ENCODE measurements at regions of chr16 and their contacts with region 1.

Region 1: GRCh38 chr16:28950648-28951409 is at the start of gene NFATC2IP:
- DNase-seq: peak; percentile 99
- H3K4me3 Mint-ChIP-seq: peak within 1 kb of the TSS; percentile 99
- H3K27ac Mint-ChIP-seq: peak within 1 kb of the TSS; percentile 92
- H3K4me1 Mint-ChIP-seq: peaks cover 19% of the 10 kb centered on the region
- H3K27me3 Mint-ChIP-seq: no peaks in the 10 kb centered on the region
- CTCF ChIP-seq: no peak
- total RNA-seq, gene NFATC2IP: 39.5 and 41.3 TPM in 2 replicates

Region 2: GRCh38 chr16:28823872-28824716 is 126.7 kb before region 1 on chr16:
- CTCF ChIA-PET with region 1: interaction called, 8 read pairs
- POLR2A ChIA-PET with region 1: interaction called, 10 read pairs
- intact Hi-C with region 1: no loop called
- DNase-seq: peak; percentile 96
- H3K4me3 Mint-ChIP-seq: peak overlapping the region; percentile 91
- H3K27ac Mint-ChIP-seq: peak overlapping the region; percentile 96
- H3K4me1 Mint-ChIP-seq: peaks cover 28% of the 10 kb centered on the region
- H3K27me3 Mint-ChIP-seq: no peaks in the 10 kb centered on the region
- CTCF ChIP-seq: peak; percentile 18

Region 3: GRCh38 chr16:28846080-28846932 is 104.5 kb before region 1 on chr16 and contains the start of gene TUFM:
- CTCF ChIA-PET with region 1: interaction called, 28 read pairs
- POLR2A ChIA-PET with region 1: interaction called, 14 read pairs
- intact Hi-C with region 1: no loop called
- DNase-seq: peak; percentile 97
- H3K4me3 Mint-ChIP-seq: peak within 1 kb of the TSS; percentile 99
- H3K27ac Mint-ChIP-seq: peak within 1 kb of the TSS; percentile 99
- H3K4me1 Mint-ChIP-seq: peaks cover 7% of the 10 kb centered on the region
- H3K27me3 Mint-ChIP-seq: no peaks in the 10 kb centered on the region
- CTCF ChIP-seq: peak; percentile 39
- total RNA-seq, gene TUFM: 184 and 198 TPM in 2 replicates

Region 4: DNA sequence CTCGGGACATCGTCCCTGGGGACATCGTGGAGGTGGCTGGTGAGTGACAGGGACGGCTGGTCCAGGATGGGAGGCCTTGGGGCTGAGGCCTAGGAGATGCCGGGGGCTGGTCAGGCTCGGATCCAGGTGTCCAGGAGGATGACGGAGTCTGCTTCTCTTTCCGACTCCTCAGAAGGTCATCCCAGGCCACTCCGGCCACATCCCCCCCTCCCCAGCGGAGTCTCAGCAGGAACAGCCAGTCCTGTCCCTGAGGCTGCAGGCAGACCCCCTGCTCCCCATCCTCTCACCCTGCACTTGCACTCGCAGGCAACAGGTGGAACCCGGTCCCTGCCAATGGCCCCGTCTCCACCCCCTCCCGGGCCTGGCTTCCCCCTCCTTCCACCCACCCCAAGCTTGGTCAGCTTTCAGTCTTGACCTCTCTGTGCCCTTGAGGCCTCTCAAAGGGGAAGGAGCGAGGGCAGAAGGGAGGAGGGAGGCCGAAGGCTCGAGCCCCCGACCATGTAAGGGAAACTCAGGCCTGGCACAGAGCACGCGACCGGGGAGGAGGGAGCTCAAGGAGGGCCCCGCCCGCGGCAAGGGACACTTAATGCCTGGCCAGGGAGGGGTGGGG is 68.2 kb before region 1 on chr16:
- CTCF ChIA-PET with region 1: no interaction called
- POLR2A ChIA-PET with region 1: no interaction called
- intact Hi-C with region 1: no loop called
- DNase-seq: no peak
- H3K4me3 Mint-ChIP-seq: no peak overlapping the region
- H3K27ac Mint-ChIP-seq: no peak overlapping the region
- H3K4me1 Mint-ChIP-seq: no peaks in the 10 kb centered on the region
- H3K27me3 Mint-ChIP-seq: peaks cover 12% of the 10 kb centered on the region
- CTCF ChIP-seq: no peak

Region 5: DNA sequence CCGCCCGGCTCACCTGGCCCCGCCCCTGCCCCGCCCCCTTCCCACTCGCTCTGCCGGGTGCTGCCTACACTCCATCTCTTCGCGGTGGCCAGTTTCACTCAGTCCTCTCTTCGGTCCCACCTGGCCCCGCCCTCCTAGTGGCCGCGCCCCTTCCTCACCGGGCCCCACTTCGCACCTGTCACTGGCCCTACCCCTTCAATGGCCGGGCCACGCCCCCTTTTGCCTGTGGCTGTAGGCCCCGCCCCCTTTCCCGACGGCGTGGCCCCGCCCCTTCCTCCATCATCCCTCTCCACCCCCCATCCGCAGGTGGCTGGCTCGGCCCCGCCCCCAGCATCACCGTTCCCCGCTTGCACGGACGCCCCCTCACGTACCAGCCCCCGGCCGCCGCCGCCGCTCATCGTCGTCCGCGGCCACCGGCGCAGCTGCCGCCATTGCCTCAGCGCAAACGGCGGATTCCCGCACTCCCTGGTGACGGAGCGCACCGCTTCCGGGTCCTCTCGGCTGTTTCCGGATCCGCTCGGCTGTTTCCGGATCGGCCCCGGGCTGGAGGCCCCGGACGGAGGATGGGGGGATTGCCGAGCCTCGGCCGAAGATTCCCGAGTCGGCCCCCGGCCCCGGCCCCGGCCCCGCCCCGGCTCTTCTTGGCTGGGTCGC is 26.0 kb before region 1 on chr16 and contains the start of gene RABEP2:
- CTCF ChIA-PET with region 1: interaction called, 8 read pairs
- POLR2A ChIA-PET with region 1: interaction called, 19 read pairs
- intact Hi-C with region 1: no loop called
- DNase-seq: peak; percentile 95
- H3K4me3 Mint-ChIP-seq: peak within 1 kb of the TSS; percentile 85
- H3K27ac Mint-ChIP-seq: peak within 1 kb of the TSS; percentile 76
- H3K4me1 Mint-ChIP-seq: peaks cover 15% of the 10 kb centered on the region
- H3K27me3 Mint-ChIP-seq: no peaks in the 10 kb centered on the region
- CTCF ChIP-seq: no peak
- total RNA-seq, gene RABEP2: 10.7 and 17.8 TPM in 2 replicates

Region 6: GRCh38 chr16:28974437-28975157 is 23.8 kb after region 1 on chr16 and contains the start of gene SPNS1:
- CTCF ChIA-PET with region 1: interaction called, 7 read pairs
- POLR2A ChIA-PET with region 1: interaction called, 30 read pairs
- intact Hi-C with region 1: loop called (anchors 2 kb)
- DNase-seq: peak; percentile 94
- H3K4me3 Mint-ChIP-seq: peak within 1 kb of the TSS; percentile 95
- H3K27ac Mint-ChIP-seq: peak within 1 kb of the TSS; percentile 96
- H3K4me1 Mint-ChIP-seq: peaks cover 12% of the 10 kb centered on the region
- H3K27me3 Mint-ChIP-seq: no peaks in the 10 kb centered on the region
- CTCF ChIP-seq: no peak
- total RNA-seq, gene SPNS1: 25.2 and 36.8 TPM in 2 replicates

Measured in MCF 10A (cell line).